Activated naive CD4-positive, alpha-beta T cell treated with anti-CD3 and anti-CD28 coated beads for 36 hours (primary cell): ENCODE measurements at regions of chr6 and their contacts with region 1.

Region 1: GRCh38 chr6:43769526-43770416 is at the start of gene VEGFA:
- DNase-seq: peak; percentile 93
- H3K4me3 Mint-ChIP-seq: peak within 1 kb of the TSS; percentile 97
- H3K27ac Mint-ChIP-seq: peak within 1 kb of the TSS; percentile 83
- H3K4me1 Mint-ChIP-seq: peaks cover 19% of the 10 kb centered on the region
- H3K27me3 Mint-ChIP-seq: no peaks in the 10 kb centered on the region
- total RNA-seq, gene VEGFA: 35.9 to 37.3 TPM

Region 2: DNA sequence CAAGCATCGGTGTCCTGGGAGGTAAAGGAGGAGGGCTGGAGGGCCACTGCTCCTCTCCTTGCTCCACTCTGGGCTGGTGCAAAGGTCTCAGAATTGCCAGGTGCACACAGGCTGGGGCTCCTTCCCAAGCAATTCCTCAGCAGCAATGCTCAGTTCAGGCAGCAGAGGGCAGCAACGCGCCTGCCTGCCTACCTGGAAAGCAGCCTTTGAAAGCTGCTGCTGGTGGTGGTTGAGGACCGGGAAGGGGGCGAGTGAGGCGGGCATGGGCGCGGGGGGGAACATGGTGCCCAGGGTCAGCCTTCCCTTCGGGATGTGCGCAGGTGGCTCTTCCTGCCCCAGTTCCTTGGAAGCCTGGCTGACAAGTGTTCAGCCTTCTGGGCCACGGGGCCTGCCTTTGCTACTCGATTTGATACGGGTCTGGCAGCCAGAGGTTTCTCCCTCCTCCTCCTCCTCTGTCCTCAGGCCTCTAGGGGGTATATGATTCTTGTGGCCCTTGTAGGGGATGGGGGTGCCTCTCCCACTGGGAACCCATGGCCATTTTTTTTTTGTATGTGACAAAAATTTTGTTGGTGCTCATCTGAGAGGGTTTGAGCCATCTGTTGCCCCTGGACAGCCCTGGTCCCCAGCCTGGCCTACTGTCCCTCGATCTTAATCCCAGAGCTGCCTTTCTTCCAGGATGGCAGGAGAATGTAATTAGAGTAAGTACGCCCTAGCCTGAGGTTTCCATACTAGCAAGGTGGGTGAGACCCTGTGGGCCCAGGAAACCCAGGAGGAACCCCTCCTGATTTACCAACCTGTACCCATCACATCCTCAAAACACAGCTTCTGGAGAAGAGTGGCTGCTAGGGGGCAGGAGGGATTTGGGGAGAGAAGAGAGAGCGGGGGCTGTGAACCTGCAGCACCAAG is 102.3 kb before region 1 on chr6:
- CTCF ChIA-PET with region 1: interaction called, 19 read pairs
- intact Hi-C with region 1: loop called (anchors 1 kb)
- DNase-seq: peak; percentile 90
- H3K4me3 Mint-ChIP-seq: peak overlapping the region; percentile 5
- H3K27ac Mint-ChIP-seq: peak overlapping the region; percentile 65
- H3K4me1 Mint-ChIP-seq: peaks cover 22% of the 10 kb centered on the region
- H3K27me3 Mint-ChIP-seq: no peaks in the 10 kb centered on the region

Region 3: DNA sequence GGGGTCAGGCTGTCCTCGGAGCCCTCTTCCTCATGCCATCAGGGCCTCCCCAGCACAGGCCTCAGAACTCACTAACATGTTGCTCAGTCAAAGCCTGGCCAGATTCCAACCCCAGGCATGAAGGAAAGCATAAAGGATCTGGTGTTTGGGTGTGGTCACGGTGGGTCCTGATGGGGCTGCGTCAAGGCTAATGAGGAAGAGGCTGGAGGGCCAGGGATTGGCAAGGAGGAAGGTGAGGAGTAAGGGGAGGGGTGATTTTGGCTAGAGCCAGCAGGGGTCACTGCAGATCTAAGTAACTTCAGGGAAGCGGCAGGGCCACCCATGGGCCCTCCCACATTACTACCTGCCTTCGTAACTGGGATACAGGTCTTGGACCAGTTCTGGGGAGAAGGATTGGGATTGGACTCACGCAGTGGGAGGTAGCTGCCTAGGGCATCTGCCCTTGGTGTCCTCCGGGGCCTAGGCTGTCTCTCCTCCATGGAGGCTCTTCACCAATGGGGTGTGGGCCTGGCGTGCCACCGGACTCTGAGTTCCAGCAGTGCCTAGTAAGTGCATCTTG is 46.0 kb before region 1 on chr6:
- CTCF ChIA-PET with region 1: interaction called, 28 read pairs
- intact Hi-C with region 1: loop called (anchors 1 kb)
- DNase-seq: peak; percentile 90
- H3K4me3 Mint-ChIP-seq: peak overlapping the region; percentile 72
- H3K27ac Mint-ChIP-seq: no peak overlapping the region
- H3K4me1 Mint-ChIP-seq: peaks cover 23% of the 10 kb centered on the region
- H3K27me3 Mint-ChIP-seq: no peaks in the 10 kb centered on the region

Region 4: DNA sequence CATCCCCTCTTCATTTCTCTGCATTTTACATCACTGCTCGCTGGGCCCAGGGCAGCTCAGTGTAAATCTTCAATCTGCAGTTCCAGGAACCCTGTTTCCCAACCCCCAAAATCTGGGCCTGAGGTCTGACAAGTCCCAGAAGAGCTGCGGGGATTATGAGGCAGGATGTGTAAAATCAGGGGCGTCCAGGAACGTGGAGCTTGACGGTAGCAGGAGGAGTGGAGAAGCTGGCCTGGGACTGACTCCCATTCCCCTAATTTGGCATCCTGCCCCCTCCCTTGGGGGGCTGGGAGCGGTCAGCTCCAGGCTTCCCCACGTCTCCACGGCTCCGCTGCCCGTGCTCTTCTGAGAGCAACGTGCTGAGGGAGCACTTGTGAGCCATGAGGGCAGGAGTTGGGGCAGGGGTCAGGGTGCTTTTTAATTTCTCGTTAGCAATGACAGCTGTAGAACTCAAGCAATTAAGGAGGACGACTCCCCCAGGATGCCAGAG is 23.1 kb before region 1 on chr6:
- CTCF ChIA-PET with region 1: interaction called, 10 read pairs
- intact Hi-C with region 1: no loop called
- DNase-seq: no peak
- H3K4me3 Mint-ChIP-seq: no peak overlapping the region
- H3K27ac Mint-ChIP-seq: no peak overlapping the region
- H3K4me1 Mint-ChIP-seq: no peaks in the 10 kb centered on the region
- H3K27me3 Mint-ChIP-seq: no peaks in the 10 kb centered on the region

Region 5: GRCh38 chr6:43838276-43839036 is 68.7 kb after region 1 on chr6:
- CTCF ChIA-PET with region 1: no interaction called
- intact Hi-C with region 1: loop called (anchors 1 kb)
- DNase-seq: peak; percentile 27
- H3K4me3 Mint-ChIP-seq: no peak overlapping the region
- H3K27ac Mint-ChIP-seq: no peak overlapping the region
- H3K4me1 Mint-ChIP-seq: no peaks in the 10 kb centered on the region
- H3K27me3 Mint-ChIP-seq: no peaks in the 10 kb centered on the region

Region 6: DNA sequence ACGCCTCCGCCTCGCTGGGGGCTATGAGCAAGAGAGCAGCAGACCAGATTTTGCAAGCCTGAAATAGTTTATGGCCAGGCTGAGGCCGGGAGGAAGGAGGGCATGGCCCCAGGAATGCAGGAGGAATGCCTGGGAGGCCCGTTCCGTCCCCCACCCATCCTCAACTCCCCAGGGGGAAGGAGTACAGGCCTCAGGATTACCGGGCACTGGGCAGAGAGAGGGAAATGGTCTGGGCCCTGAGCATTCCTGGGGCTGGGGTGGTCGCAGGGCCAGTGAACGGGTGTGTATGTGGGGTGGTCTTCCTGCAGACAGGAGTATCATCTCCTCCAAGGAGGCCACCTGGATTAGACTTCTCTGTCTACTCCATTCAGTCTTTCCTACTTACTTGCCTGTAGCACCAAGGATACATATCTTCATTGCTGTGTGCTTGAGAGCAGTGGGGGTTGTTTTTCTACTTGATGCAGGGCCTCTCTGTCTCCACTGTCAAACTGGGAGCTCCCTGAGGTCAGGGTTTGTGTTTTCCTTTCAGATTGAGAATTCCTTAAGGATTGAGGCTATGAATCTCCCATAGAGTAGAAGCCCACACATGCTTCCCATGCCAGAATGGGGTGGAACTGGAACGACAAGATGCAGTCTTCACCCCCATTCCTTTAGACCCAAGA is 81.6 kb after region 1 on chr6:
- CTCF ChIA-PET with region 1: no interaction called
- intact Hi-C with region 1: no loop called
- DNase-seq: no peak
- H3K4me3 Mint-ChIP-seq: no peak overlapping the region
- H3K27ac Mint-ChIP-seq: no peak overlapping the region
- H3K4me1 Mint-ChIP-seq: no peaks in the 10 kb centered on the region
- H3K27me3 Mint-ChIP-seq: no peaks in the 10 kb centered on the region

Region 7: DNA sequence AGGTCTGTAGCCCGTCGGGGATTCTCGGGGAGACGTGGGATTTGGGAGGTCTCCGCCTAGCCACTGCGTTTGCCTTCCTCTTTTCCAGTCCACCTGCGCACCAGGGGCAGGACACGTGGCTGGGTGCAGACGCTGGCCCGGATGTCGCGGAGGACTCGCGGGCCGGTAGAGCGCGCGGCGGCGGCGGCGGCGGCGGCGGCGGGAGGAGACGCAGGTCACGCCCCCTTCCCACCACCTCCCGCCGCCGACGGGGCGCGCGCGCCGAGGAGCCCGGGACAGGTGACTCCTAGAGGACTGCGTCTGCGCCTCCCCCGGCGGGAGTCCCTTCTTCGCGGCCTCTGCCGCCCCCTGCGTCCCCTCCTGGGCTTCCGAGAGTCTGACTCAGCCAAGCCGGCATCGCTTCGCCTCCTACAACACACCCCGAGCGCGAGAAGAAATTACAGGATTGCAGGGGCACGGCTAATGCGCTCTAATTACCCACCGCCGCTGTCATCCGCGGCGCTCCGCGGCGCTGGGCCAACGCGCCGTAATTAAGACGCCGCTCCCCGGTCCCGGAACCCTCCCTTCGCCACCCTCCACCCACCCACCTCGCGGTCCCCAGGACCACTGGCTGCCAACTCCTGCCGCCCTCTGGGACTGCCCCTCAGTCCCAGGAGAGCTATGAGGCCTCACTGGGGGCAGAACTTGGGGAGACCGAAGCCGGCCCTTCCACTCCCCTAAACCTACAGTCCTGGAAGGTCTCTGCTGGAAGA is 233.0 kb after region 1 on chr6:
- CTCF ChIA-PET with region 1: interaction called, 6 read pairs
- intact Hi-C with region 1: loop called (anchors 1 kb)
- DNase-seq: peak; percentile 81
- H3K4me3 Mint-ChIP-seq: peak overlapping the region; percentile 89
- H3K27ac Mint-ChIP-seq: no peak overlapping the region
- H3K4me1 Mint-ChIP-seq: peaks cover 16% of the 10 kb centered on the region
- H3K27me3 Mint-ChIP-seq: peaks cover 27% of the 10 kb centered on the region

Region 8: GRCh38 chr6:44127186-44128019 is 357.6 kb after region 1 on chr6 and contains the starts of genes MRPL14 and TMEM63B:
- CTCF ChIA-PET with region 1: no interaction called
- intact Hi-C with region 1: loop called (anchors 2 kb)
- DNase-seq: peak; percentile 86
- H3K4me3 Mint-ChIP-seq: peak within 1 kb of the TSS; percentile 88
- H3K27ac Mint-ChIP-seq: peak within 1 kb of the TSS; percentile 93
- H3K4me1 Mint-ChIP-seq: peaks cover 41% of the 10 kb centered on the region
- H3K27me3 Mint-ChIP-seq: no peaks in the 10 kb centered on the region
- total RNA-seq, gene MRPL14: 40.9 to 41.0 TPM
- total RNA-seq, gene TMEM63B: 7.8 to 8.3 TPM